H1 (cell line): ENCODE measurements at regions of chr1 and their contacts with region 1.

Region 1: DNA sequence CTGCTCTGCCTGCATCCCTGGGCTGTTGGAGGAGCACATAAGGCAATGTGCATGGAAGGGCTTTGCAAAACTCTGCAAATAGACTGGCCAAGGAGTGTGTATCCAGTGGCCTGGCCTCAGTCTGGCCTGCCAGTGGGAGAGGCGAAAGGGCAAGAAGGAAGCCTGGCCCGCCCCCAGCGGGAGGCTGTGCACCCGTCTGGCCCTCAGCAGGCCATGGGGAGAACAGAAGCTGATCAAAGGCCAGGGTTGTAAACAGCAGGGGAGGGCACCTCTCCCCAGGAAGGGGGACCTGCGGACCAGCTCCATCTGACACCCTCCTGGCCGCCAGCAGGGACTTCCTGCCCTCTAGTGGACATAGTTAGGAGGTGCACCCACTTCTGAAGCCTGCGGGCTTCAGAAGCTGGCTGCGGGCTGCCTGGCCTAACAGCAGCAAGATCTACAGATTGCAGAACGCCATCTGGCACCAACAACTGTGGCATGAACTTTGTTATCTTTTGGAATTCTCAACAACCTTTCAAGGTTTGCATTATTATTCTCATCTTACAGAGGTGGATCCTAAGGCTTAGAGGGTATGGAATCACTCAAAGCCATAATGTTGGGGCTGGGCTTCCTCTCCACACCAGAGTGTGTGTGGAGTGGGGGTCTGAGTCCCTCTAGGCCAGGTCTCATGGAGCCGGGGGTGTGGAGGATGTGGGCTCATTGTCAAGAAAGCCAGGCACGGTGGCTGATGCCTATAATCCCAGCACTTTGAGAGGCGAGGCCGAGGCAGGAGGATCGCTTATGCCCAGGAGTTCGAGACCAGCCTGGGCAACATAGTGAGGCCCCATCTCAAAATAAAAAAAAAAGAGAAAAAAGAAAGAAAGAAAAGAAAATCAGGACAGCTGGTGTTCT is 18.9 kb upstream of the CDK18 start:
- DNase-seq: peak; percentile 67 to 90
- H3K4me3 ChIP-seq: peak overlapping the region in 1 of 4 experiments; percentile 28; a peak in 1 of 8 replicates
- H3K27ac ChIP-seq: no peak overlapping the region
- H3K4me1 ChIP-seq: peaks cover 0 to 16% (median 8%) of the 10 kb centered on the region in 4 experiments; a peak in 6 of 7 replicates
- H3K27me3 ChIP-seq: peaks cover 0 to 11% (median 4%) of the 10 kb centered on the region in 4 experiments; a peak in 4 of 7 replicates
- CTCF ChIP-seq: peak; percentile 96 to 98 (median 97)
- EP300 ChIP-seq: peak in 1 of 2 experiments; percentile 53; a peak in 1 of 3 replicates
- POLR2A ChIP-seq: no peak
- RAD21 ChIP-seq: peak; percentile 96 to 99

Region 2: GRCh38 chr1:205306929-205307566 is 178.5 kb before region 1 on chr1:
- CTCF ChIA-PET with region 1: no interaction called
- POLR2A ChIA-PET with region 1: no interaction called
- DNase-seq: no peak
- H3K4me3 ChIP-seq: no peak overlapping the region
- H3K27ac ChIP-seq: no peak overlapping the region
- H3K4me1 ChIP-seq: peaks cover 6 to 11% (median 10%) of the 10 kb centered on the region in 4 experiments
- H3K27me3 ChIP-seq: no peaks in the 10 kb centered on the region
- CTCF ChIP-seq: no peak
- EP300 ChIP-seq: no peak
- POLR2A ChIP-seq: no peak
- RAD21 ChIP-seq: no peak

Region 3: DNA sequence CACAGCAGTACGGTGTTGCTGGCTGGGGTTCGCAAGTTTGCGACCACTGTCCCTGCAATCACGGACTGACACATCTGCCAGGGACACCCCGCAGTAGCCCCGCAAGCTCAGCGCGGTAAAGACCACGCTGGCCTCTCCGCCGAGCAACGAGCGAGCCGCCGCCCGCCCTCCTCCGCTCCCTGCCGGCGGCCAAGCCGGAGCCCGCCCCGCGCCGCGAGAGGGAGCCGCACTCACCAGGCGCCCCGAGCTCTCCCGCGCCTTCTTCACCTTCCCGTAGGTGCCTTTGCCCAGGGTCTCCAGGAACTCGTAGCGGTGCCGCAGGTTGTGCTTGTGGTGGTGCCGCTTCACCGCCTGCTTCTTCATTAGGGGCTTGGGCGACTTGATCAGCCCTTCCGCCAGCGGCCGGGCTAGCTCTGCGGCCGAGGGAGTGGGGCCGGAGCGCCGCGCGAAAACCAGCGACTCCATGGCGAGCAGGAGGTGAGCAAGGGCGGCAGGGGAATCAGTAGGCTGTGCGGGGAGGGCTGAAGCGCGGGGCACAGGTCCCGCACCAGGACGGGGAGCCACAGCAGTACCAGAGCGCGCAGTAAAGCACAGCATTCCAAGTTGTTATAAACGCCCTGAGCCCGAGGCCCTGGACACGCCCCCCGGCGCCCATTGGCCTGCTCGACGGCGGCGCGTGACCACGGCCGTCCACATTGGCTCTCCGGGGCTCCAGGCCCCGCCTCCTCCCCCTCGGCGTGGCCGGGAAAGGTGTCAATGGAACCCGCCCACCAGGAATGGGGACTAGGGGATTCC is 164.2 kb before region 1 on chr1 and contains the start of gene NUAK2:
- CTCF ChIA-PET with region 1: interaction called, 13 read pairs
- POLR2A ChIA-PET with region 1: no interaction called
- DNase-seq: peak; percentile 82 to 96
- H3K4me3 ChIP-seq: peak within 1 kb of the TSS; percentile 67 to 93 (median 80)
- H3K27ac ChIP-seq: peak within 1 kb of the TSS; percentile 81
- H3K4me1 ChIP-seq: peaks cover 26 to 37% (median 31%) of the 10 kb centered on the region in 4 experiments
- H3K27me3 ChIP-seq: no peaks in the 10 kb centered on the region
- CTCF ChIP-seq: no peak
- EP300 ChIP-seq: no peak
- POLR2A ChIP-seq: peak; percentile 63 to 92
- RAD21 ChIP-seq: no peak
- total RNA-seq, gene NUAK2: 12.7 and 12.9 TPM in 2 replicates

Region 4: GRCh38 chr1:205344066-205344928 is 141.3 kb before region 1 on chr1:
- CTCF ChIA-PET with region 1: interaction called, 10 read pairs
- POLR2A ChIA-PET with region 1: no interaction called
- DNase-seq: peak in 1 of 2 experiments; percentile 72
- H3K4me3 ChIP-seq: peak overlapping the region; percentile 52 to 70 (median 56)
- H3K27ac ChIP-seq: no peak overlapping the region
- H3K4me1 ChIP-seq: peaks cover 5 to 10% (median 8%) of the 10 kb centered on the region in 4 experiments
- H3K27me3 ChIP-seq: peaks cover 11 to 30% (median 29%) of the 10 kb centered on the region in 4 experiments
- CTCF ChIP-seq: no peak
- EP300 ChIP-seq: no peak
- POLR2A ChIP-seq: no peak
- RAD21 ChIP-seq: no peak

Region 5: DNA sequence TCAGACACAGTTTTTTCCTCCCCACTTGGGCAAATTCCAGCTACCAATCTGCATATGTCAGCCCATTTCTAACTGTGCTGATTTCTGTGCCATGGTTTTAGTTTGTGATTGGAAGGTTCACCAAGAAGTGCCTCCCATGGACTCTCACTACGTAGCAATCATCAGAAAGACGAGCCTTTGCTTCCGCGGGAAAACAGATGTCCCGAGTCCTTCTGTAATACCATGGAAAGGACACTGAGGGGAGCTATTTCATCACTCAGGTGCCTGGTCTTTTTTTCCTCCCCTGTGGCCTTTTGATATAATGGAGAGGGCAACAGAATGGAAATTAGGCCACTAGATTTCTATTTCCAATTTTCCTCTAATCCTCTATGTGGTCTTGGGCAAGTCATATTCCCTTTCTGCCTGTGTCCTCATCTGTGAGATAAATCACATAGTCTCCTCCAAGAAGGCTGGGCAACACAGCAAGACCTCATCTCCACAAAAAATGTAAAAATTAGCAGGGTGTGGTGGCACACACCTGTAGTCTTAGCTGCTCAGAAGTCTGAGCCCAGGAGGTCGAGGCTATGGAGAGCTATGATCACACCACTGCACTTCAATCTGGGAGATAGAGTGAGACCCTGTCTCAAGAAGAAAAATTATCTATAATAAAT is 88.5 kb before region 1 on chr1:
- CTCF ChIA-PET with region 1: interaction called, 93 read pairs
- POLR2A ChIA-PET with region 1: interaction called, 3 read pairs
- DNase-seq: no peak
- H3K4me3 ChIP-seq: no peak overlapping the region
- H3K27ac ChIP-seq: no peak overlapping the region
- H3K4me1 ChIP-seq: no peaks in the 10 kb centered on the region
- H3K27me3 ChIP-seq: no peaks in the 10 kb centered on the region
- CTCF ChIP-seq: peak; percentile 27 to 93 (median 90)
- EP300 ChIP-seq: 0 out of 3 replicates have a peak, but pooled peaks of 1 of the 2 experiments have one; percentile 20
- POLR2A ChIP-seq: no peak
- RAD21 ChIP-seq: peak; percentile 99 to 100

Region 6: DNA sequence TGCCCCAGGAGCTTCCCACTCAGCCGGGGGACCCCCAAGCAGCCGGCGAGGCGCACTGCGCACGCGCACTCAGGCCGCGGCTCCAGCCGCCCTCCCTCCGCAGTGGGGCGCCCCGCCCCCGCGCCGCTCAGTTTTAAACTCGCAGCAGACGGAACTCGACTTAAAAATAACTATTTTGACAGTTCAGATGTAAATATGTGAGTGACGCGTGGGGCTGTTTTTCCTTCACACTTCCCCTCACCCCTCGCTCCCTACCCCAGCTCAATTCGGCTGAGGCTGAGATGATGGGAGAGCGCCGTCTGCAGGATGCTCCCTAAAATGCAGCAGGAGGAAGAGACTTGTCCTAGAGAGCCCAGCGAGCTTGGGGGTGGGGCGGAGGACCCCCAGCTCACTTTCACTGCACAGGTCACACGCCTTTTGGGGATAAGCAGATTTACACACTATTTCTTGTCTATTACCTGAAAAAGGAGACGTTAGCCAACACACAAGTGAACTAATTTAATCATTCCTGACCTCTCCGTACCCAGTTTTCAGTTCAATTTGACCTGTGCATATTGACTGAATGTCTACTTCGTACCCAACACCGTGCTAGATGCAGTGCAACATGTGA is 54.8 kb before region 1 on chr1:
- CTCF ChIA-PET with region 1: interaction called, 767 read pairs
- POLR2A ChIA-PET with region 1: interaction called, 4 read pairs
- DNase-seq: peak in 1 of 2 experiments; percentile 91
- H3K4me3 ChIP-seq: peak overlapping the region; percentile 25 to 73 (median 44)
- H3K27ac ChIP-seq: no peak overlapping the region
- H3K4me1 ChIP-seq: peaks cover 2 to 5% (median 3%) of the 10 kb centered on the region in 4 experiments; a peak in 4 of 7 replicates
- H3K27me3 ChIP-seq: peaks cover 0 to 20% (median 11%) of the 10 kb centered on the region in 4 experiments; a peak in 6 of 7 replicates
- CTCF ChIP-seq: peak; percentile 85 to 97 (median 96)
- EP300 ChIP-seq: 0 out of 3 replicates have a peak, but pooled peaks of 1 of the 2 experiments have one; percentile 4
- POLR2A ChIP-seq: no peak; a peak in 1 of 3 replicates
- RAD21 ChIP-seq: peak; percentile 69 to 82

Region 7: GRCh38 chr1:205528887-205529825 is 43.6 kb after region 1 on chr1:
- CTCF ChIA-PET with region 1: interaction called, 1,626 read pairs
- POLR2A ChIA-PET with region 1: interaction called, 14 read pairs
- DNase-seq: peak; percentile 56 to 100
- H3K4me3 ChIP-seq: peak overlapping the region in 2 of 4 experiments; percentile 19 to 26; a peak in 3 of 8 replicates
- H3K27ac ChIP-seq: no peak overlapping the region
- H3K4me1 ChIP-seq: peaks cover 0 to 10% (median 2%) of the 10 kb centered on the region in 4 experiments; a peak in 4 of 7 replicates
- H3K27me3 ChIP-seq: no peaks in the 10 kb centered on the region; a peak in 1 of 7 replicates
- CTCF ChIP-seq: peak in 2 of 3 experiments; percentile 85 to 94; a peak in 3 of 4 replicates
- EP300 ChIP-seq: no peak; a peak in 1 of 3 replicates
- POLR2A ChIP-seq: no peak
- RAD21 ChIP-seq: peak; percentile 77 to 88

Region 8: DNA sequence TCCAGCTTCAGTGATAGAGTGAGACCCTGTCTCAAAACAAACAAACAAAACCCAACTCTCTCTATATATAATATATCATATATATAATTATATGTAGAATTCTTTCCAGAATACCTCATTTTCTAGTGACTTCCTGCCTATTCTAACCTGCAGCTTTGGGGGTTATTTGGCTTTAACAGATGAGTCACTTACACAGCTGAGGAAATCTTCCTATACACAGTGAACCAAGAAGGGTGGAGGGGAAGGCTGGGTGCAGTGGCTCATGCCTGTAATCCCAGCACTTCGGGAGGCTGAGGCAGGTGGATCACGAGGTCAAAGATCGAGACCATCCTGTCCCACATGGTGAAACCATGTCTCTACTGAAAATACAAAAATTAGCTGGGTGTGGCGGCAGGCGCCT is 280.5 kb after region 1 on chr1:
- CTCF ChIA-PET with region 1: no interaction called
- POLR2A ChIA-PET with region 1: no interaction called
- DNase-seq: no peak
- H3K4me3 ChIP-seq: no peak overlapping the region
- H3K27ac ChIP-seq: no peak overlapping the region
- H3K4me1 ChIP-seq: no peaks in the 10 kb centered on the region
- H3K27me3 ChIP-seq: no peaks in the 10 kb centered on the region
- CTCF ChIP-seq: no peak
- EP300 ChIP-seq: no peak
- POLR2A ChIP-seq: no peak
- RAD21 ChIP-seq: no peak